ENCODE measurements at regions of chr20 and their contacts with region 1.

Region 1: GRCh38 chr20:49446808-49447207 is 35.7 kb downstream of the KCNB1 start:
- DNase-seq: peak; percentile 69
- H3K4me3 ChIP-seq: no peak overlapping the region
- H3K27ac ChIP-seq: peak overlapping the region; percentile 66 to 87 (median 76)
- H3K4me1 ChIP-seq: peaks cover 6 to 34% (median 19%) of the 10 kb centered on the region in 4 donors
- H3K27me3 ChIP-seq: peaks cover 2% of the 10 kb centered on the region
- CTCF ChIP-seq: no peak
- EP300 ChIP-seq: no peak
- POLR2A ChIP-seq: no peak

Region 2: GRCh38 chr20:49397525-49397924 is 49.3 kb before region 1 on chr20:
- in situ Hi-C with region 1: no loop called
- intact Hi-C with region 1: loop called (anchors 10 kb)
- DNase-seq: no peak
- H3K4me3 ChIP-seq: no peak overlapping the region
- H3K27ac ChIP-seq: peak overlapping the region; percentile 1 to 84 (median 29)
- H3K4me1 ChIP-seq: peaks cover 10 to 27% (median 16%) of the 10 kb centered on the region in 4 donors
- H3K27me3 ChIP-seq: no peaks in the 10 kb centered on the region
- CTCF ChIP-seq: no peak
- EP300 ChIP-seq: no peak
- POLR2A ChIP-seq: no peak